CD8-positive, alpha-beta T cell (primary cell): ENCODE measurements at regions of chr17 and their contacts with region 1.

Region 1: DNA sequence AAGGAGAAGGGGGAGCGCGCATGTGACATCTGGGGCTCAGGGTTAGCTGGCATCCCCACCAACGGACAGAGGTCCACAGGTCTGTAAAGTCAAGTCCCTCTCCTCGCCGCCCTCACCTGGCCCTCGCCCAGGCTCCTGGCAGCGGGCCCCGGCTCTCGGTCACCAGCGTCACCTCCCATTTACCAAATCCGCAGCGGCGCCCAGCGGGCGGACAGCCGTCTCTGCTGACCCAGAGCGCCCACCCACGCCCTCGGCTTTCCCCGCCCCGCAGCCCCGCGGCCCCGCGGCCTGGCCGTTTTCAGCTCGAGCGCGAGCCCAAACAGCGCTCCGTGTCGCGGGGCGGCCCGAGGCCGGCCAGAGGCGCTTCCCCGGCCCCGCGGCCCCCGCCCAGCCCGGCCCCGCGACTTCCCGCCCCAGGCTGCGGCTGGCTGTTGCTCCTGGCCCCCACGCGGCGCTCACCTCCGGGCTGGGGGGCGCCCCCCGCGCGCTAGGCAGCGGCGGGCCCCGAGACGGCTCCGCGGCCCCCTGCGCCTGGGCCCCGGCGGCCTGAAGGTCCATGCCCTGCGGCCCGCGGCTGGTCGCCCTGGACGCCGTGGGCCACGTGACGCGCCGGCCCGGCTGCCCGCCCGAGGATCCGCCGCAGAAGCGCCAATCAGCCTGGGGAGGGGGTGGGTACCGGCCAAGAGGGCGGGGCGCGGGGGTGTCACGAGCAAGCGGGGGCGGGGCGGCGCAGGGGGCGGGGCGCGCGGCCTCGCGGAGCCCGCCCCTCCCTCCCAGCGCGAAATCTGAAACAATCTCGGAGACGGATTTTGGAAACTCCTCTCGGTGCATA is at the start of gene COPRS:
- DNase-seq: peak; percentile 53 to 88 (median 77)
- ATAC-seq: peak; percentile 92
- H3K4me3 ChIP-seq: peak within 1 kb of the TSS; percentile 53 to 69
- H3K4me3 Mint-ChIP-seq: peak within 1 kb of the TSS; percentile 86
- H3K27ac ChIP-seq: no peak within 1 kb of the TSS
- H3K27ac Mint-ChIP-seq: peak within 1 kb of the TSS; percentile 15
- H3K4me1 ChIP-seq: peaks cover 14% of the 10 kb centered on the region
- H3K4me1 Mint-ChIP-seq: peaks cover 16% of the 10 kb centered on the region
- H3K27me3 ChIP-seq: no peaks in the 10 kb centered on the region
- H3K27me3 Mint-ChIP-seq: no peaks in the 10 kb centered on the region
- CTCF ChIP-seq: no peak
- total RNA-seq, gene COPRS: 2.4 to 2.6 TPM

Region 2: DNA sequence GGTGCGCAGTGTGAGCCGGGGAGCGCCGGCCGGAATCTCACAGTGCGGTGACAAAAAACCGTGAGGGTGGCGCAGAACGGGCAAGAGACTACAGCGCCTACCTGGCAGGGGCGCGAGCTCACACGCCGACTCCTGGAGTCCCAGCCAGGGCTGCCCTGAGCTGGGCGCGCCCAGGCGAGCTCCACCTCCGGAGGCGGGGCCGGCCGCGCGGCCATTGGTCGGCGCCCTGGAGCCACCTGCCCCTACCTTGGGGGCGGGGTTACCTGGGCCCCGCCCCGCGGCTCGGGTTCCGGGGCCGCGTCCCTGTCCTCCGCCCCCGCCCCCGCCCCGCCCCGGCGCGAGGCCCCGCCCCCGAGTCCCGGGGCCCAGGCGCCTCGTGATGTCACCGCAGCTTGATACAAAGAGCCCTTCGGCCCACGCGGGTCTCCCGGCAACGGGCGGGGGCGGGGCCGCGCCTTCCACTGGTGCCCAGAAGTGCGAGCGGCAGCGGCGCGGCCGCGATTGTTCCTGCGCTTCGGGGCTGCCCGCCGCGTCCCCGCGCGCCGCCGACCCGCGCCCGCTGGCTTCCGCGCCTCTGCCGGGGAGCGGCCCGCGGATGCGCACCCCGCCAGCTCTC is 371.1 kb before region 1 on chr17:
- CTCF ChIA-PET with region 1: no interaction called
- POLR2A ChIA-PET with region 1: no interaction called
- intact Hi-C with region 1: loop called (anchors 2 to 5 kb)
- DNase-seq: peak; percentile 92 to 98 (median 96)
- ATAC-seq: peak; percentile 91
- H3K4me3 ChIP-seq: peak overlapping the region; percentile 80 to 83
- H3K4me3 Mint-ChIP-seq: peak overlapping the region; percentile 92
- H3K27ac ChIP-seq: peak overlapping the region; percentile 85 to 89
- H3K27ac Mint-ChIP-seq: peak overlapping the region; percentile 96
- H3K4me1 ChIP-seq: peaks cover 49% of the 10 kb centered on the region
- H3K4me1 Mint-ChIP-seq: peaks cover 50% of the 10 kb centered on the region
- H3K27me3 ChIP-seq: no peaks in the 10 kb centered on the region
- H3K27me3 Mint-ChIP-seq: no peaks in the 10 kb centered on the region
- CTCF ChIP-seq: no peak

Region 3: DNA sequence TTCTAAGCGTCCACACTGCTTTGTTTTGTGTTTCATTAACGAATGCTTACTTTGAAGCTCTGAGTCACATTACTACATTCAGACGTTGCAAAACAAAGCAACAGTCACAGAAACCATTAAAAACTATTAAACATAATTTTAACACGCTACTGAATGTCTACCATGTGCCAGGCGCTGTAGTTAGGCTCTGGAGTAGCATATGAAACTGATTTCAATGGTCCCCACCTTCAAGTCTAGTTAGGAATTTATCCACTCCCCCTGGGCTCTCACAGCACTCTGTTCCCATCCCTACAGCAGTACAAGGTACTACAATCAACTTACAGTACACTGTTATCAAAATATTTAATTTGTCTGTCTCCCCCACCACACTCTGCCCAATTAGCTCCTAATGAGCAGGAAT is 42.0 kb after region 1 on chr17:
- CTCF ChIA-PET with region 1: no interaction called
- POLR2A ChIA-PET with region 1: interaction called, 3 read pairs
- intact Hi-C with region 1: loop called (anchors 1 kb)
- DNase-seq: no peak
- ATAC-seq: no peak
- H3K4me3 ChIP-seq: peak overlapping the region; percentile 65 to 72
- H3K4me3 Mint-ChIP-seq: no peak overlapping the region
- H3K27ac ChIP-seq: peak overlapping the region; percentile 57 to 71
- H3K27ac Mint-ChIP-seq: no peak overlapping the region
- H3K4me1 ChIP-seq: peaks cover 10% of the 10 kb centered on the region
- H3K4me1 Mint-ChIP-seq: peaks cover 18% of the 10 kb centered on the region
- H3K27me3 ChIP-seq: no peaks in the 10 kb centered on the region
- H3K27me3 Mint-ChIP-seq: no peaks in the 10 kb centered on the region
- CTCF ChIP-seq: no peak